Activated B cell treated with CpG ODN at 0.5 μM for 24 hours (primary cell): ENCODE measurements at regions of chr1 and their contacts with region 1.

Region 1: GRCh38 chr1:29235955-29236684 is at the start of gene PTPRU:
- DNase-seq: peak; percentile 93
- ATAC-seq: peak; percentile 95
- H3K4me3 Mint-ChIP-seq: peak within 1 kb of the TSS; percentile 84
- H3K27ac Mint-ChIP-seq: peak within 1 kb of the TSS; percentile 22
- H3K4me1 Mint-ChIP-seq: peaks cover 22% of the 10 kb centered on the region
- H3K27me3 Mint-ChIP-seq: peaks cover 41% of the 10 kb centered on the region
- CTCF ChIP-seq: no peak
- total RNA-seq, gene PTPRU: 0.24 TPM in 1 of 2 replicates, not detected in the other

Region 2: GRCh38 chr1:29465755-29466154 is 229.6 kb after region 1 on chr1:
- CTCF ChIA-PET with region 1: no interaction called
- POLR2A ChIA-PET with region 1: no interaction called
- intact Hi-C with region 1: no loop called
- DNase-seq: no peak
- ATAC-seq: no peak
- H3K4me3 Mint-ChIP-seq: no peak overlapping the region
- H3K27ac Mint-ChIP-seq: no peak overlapping the region
- H3K4me1 Mint-ChIP-seq: no peaks in the 10 kb centered on the region
- H3K27me3 Mint-ChIP-seq: no peaks in the 10 kb centered on the region
- CTCF ChIP-seq: no peak

Region 3: GRCh38 chr1:30379684-30380624 is 1143.8 kb after region 1 on chr1:
- CTCF ChIA-PET with region 1: interaction called, 20 read pairs
- POLR2A ChIA-PET with region 1: no interaction called
- intact Hi-C with region 1: loop called (anchors 1 kb)
- DNase-seq: no peak
- ATAC-seq: no peak
- H3K4me3 Mint-ChIP-seq: no peak overlapping the region
- H3K27ac Mint-ChIP-seq: no peak overlapping the region
- H3K4me1 Mint-ChIP-seq: peaks cover 3% of the 10 kb centered on the region
- H3K27me3 Mint-ChIP-seq: peaks cover 26% of the 10 kb centered on the region
- CTCF ChIP-seq: peak; percentile 34